Thyroid gland (tissue), 4 donors: ENCODE measurements at regions of chr14 and their contacts with region 1.

Region 1: DNA sequence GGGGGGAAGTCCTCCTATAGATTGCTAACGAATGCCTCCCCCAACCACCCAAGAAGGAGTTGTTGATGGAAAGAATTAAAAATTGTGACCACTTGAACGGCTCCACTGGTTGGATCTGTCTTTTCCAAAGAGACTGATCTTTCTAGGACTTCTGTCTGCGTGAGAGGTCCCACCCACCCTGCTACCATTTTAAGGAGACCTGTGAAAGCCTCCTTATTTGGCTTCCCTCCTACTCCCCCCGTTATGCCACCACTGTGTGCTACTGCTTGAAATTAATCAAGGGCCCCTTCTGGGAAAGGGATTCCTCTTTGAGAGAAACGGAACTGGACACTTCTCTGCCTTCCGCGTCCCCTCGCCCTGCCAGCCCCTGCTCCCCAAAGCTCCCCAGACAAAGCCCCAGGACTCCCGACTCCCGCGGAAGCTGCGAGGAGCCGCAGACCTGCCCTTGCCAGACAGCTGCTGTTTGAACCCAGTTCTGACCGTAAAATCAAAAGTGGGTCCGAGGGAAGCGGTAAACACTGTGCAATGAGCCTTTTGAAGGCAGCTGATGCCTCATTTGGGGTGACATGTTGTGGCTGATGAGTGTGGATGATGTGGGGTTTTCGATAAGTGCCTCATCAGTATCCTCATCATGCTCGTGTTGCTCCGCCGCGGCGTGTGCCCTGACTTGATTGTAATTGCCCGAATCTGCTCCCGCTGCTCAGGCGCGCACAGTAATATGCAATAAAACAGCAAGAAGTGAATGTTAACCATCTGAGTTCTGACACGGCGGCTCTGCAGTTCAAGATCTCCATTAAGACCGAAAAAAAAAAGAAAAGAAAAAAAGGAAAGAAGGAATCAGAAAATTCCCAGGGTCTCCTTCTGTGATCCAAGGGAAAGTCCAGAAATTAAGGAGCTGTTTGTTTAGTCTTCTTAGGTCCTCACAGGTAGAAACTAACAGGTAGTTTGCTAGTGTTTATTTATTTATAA is 48.2 kb downstream of the MBIP start:
- DNase-seq: peak; percentile 57
- H3K4me3 ChIP-seq: peak overlapping the region; percentile 14 to 76 (median 36)
- H3K27ac ChIP-seq: peak overlapping the region; percentile 96 to 98 (median 97)
- H3K4me1 ChIP-seq: peaks cover 24 to 55% of the 10 kb centered on the region in 2 donors
- H3K27me3 ChIP-seq: no peaks in the 10 kb centered on the region
- CTCF ChIP-seq: no peak
- POLR2A ChIP-seq: peak in 1 of 2 donors; percentile 47

Region 2: GRCh38 chr14:36418937-36419336 is 146.7 kb after region 1 on chr14:
- intact Hi-C with region 1: no loop called
- DNase-seq: no peak
- H3K4me3 ChIP-seq: no peak overlapping the region
- H3K27ac ChIP-seq: no peak overlapping the region
- H3K4me1 ChIP-seq: no peaks in the 10 kb centered on the region
- H3K27me3 ChIP-seq: no peaks in the 10 kb centered on the region
- CTCF ChIP-seq: no peak
- POLR2A ChIP-seq: no peak

Region 3: GRCh38 chr14:36478782-36479181 is 206.6 kb after region 1 on chr14:
- intact Hi-C with region 1: no loop called
- DNase-seq: no peak
- H3K4me3 ChIP-seq: no peak overlapping the region
- H3K27ac ChIP-seq: no peak overlapping the region
- H3K4me1 ChIP-seq: peaks cover 0 to 4% of the 10 kb centered on the region in 2 donors
- H3K27me3 ChIP-seq: no peaks in the 10 kb centered on the region
- CTCF ChIP-seq: no peak
- POLR2A ChIP-seq: no peak

Region 4: DNA sequence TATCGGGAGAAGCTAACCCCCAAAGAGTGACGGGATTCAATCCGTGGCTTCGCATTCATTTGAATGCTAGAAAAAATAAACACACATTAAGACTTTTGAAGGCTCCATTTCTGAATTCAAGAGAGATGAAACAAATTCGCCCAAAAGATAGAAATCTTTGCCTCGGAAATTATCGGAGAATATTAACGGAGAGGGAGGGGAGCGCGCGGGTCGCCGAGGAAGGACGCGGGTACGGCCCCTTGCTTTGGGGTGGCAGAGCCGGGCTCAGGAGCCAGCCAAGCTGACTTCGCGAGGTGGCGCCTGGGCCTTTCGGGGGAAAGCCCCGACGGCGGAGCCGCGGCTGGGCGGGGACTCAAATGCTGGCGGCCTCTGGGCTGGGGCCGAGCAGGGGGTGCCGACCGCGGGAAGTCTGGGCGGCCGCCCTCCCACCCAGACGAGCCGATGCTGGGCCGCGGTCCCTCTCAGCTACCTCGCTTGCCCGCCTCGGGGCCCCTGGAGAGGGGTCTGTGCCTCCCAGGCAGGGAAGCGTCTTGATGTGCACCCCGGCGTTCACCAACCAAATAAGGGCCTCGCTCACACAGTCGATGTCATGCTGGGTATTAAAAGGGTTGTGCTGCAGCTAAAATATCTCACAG is 233.1 kb after region 1 on chr14:
- intact Hi-C with region 1: loop called (anchors 5 kb)
- DNase-seq: peak; percentile 67 to 74
- H3K4me3 ChIP-seq: peak overlapping the region; percentile 1 to 81 (median 7)
- H3K27ac ChIP-seq: peak overlapping the region; percentile 98 to 100 (median 99)
- H3K4me1 ChIP-seq: peaks cover 0 to 16% of the 10 kb centered on the region in 2 donors
- H3K27me3 ChIP-seq: no peaks in the 10 kb centered on the region
- CTCF ChIP-seq: no peak
- POLR2A ChIP-seq: peak; percentile 33 to 69